ENCODE measurements at regions of chr6 and their contacts with region 1.

Region 1: DNA sequence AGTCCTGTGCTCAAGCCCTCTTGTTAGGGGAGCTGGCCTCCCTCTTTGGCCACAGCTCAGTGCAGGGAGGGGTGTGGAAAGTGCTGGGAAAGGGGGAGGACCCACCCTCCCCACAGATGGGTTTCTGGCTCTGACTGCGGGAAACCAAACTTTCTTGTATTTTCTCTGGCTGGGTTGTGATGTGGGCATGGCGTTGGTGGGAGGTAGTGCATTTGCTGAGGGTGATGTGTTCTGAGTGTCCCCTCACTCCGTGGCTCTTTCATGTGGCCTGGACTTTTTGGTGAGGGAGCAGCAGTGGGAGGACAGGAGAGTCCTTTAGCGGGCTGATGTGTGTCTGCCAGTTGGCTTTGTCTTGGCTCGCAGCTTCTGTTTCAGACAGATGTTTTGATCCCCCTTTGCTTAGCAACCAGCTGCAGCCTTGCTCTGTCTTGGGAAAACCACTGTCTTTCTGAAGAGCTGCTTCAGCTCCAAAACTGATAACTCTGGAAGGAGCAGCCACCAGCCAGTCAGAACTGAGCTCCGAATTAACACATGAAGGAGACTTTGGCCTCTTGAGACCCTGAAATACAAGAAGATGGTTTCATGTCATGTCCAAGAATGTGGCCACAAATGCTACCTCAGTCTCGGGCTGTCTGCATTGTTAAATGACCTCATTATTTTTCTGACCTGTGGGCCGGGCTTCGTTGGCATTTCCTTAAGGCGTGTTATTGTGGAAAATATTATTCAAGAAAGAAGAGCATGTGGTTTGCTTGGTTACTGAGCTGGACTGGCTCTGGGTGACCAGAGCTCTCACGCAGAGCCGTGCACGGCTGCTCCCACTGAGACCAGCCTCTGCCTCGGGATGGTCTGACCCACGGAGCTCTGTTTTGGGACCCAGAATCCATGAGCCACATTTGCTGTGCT is 21.5 kb downstream of the SYNJ2 start:
- DNase-seq: peak; percentile 46 to 59
- H3K4me3 ChIP-seq: no peak overlapping the region
- H3K27ac ChIP-seq: peak overlapping the region; percentile 68
- H3K4me1 ChIP-seq: peaks cover 41% of the 10 kb centered on the region
- H3K27me3 ChIP-seq: no peaks in the 10 kb centered on the region
- CTCF ChIP-seq: no peak

Region 2: DNA sequence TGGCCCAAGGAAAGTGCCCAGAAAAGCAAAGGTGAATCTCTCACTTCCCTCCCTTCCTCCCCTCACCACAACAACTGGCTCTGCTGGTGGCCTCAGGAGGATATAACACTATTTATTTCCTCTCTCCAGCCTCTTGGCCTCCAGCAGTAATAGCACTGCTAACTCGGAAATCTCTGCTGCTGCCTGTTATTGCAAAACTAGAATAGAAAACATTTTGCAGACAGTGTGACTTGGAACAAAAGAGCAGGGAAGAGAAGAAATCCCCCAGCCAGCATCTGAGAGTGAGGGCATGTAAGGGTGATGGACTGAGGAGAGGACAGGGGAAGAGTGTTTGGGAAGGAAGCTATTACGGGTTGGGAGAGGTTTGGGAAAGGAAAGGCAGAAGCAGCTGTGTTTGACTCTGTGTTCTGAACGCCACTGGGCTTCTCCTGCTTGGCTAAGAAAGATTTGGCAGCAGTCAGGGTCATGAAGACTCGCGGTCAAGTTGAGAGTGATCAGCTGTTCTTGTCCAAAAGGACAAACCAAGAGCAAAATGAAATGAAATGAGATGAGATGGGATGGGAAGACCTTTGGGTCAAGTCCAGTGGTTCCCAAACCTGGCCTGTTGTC is 261.1 kb before region 1 on chr6:
- CTCF ChIA-PET with region 1: no interaction called
- POLR2A ChIA-PET with region 1: no interaction called
- intact Hi-C with region 1: no loop called
- DNase-seq: no peak
- H3K4me3 ChIP-seq: no peak overlapping the region
- H3K27ac ChIP-seq: no peak overlapping the region
- H3K4me1 ChIP-seq: no peaks in the 10 kb centered on the region
- H3K27me3 ChIP-seq: no peaks in the 10 kb centered on the region
- CTCF ChIP-seq: no peak

Region 3: DNA sequence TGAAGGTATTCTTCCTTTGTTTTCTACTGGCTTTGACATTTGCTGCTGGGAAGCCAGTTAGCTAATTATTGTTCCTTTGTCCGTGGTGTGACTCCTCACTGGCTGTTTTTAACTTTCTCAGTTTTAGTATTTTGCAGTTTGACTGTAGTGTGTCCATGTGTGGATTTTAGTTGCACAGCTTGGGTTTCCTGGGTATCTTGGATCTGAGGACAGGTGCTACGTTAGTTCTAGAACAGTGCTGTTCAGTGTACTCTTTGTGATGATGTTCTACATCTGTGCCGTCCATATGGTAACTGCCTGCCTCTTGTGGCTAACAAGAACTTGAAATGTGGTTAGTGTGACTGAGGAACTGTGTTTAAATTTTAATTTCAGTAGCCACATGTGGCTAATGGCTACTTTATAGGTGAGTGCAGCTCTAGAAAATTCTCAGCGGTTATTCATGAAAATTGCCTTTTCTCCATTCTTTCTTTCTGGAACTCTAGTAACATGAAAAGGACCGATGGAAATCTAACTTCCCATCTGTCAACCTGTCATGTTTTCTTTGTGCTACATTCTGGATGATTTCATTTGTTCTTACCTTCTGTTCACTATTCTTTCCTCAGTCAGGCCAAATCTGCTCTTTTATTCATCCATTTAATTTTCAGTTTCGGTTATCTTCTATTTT is 172.7 kb before region 1 on chr6:
- CTCF ChIA-PET with region 1: no interaction called
- POLR2A ChIA-PET with region 1: no interaction called
- intact Hi-C with region 1: no loop called
- DNase-seq: no peak
- H3K4me3 ChIP-seq: no peak overlapping the region
- H3K27ac ChIP-seq: 0 out of 2 replicates have a peak overlapping the region, but pooled peaks have one; percentile 88
- H3K4me1 ChIP-seq: peaks cover 52% of the 10 kb centered on the region
- H3K27me3 ChIP-seq: no peaks in the 10 kb centered on the region
- CTCF ChIP-seq: no peak

Region 4: DNA sequence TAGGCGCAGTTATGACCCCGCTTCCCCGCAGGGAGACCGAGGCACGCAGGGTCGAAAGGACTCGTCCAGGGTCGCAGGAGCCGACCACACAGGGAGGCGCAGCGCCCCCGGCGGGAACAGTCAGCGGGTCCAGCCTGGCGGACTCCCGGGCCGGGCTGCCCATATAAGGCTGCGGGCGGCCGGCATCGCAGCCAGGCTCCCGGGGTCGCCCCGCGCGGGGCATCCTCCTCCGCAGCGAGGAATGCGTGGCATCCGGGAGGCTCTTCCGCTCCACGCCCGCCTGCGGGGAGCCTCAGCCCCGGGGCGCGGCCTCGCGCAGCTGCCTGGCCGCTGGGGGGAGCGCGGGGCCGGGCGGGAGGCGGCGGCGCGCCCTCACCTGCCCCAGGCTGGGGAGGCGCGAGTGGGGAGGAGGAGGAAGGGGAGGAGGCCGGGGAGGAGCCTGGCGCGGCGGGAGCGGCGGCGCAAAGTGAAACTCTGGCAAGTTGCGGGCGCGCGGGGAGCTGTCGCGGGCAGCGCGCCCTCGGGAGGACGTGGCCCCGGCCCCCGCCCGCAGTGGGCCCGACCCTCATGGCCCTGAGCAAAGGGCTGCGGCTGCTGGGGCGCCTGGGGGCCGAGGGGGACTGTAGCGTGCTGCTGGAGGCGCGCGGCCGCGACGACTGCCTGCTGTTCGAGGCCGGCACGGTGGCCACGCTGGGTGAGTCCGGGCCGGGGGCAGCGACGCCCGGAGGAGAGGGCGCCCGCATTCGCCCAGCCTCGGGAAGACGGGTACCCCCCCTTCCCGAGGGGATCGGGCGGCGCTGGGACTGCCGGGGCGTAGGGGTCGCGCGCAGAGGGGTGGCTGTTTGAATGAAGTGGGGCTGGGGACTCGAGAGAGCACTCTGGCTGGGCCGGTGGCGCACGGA is 21.6 kb before region 1 on chr6 and contains the start of gene SYNJ2:
- CTCF ChIA-PET with region 1: no interaction called
- POLR2A ChIA-PET with region 1: no interaction called
- intact Hi-C with region 1: loop called (anchors 1 kb)
- DNase-seq: peak; percentile 46 to 79
- H3K4me3 ChIP-seq: peak within 1 kb of the TSS; percentile 86
- H3K27ac ChIP-seq: 0 out of 2 replicates have a peak within 1 kb of the TSS, but pooled peaks have one; percentile 21
- H3K4me1 ChIP-seq: peaks cover 46% of the 10 kb centered on the region
- H3K27me3 ChIP-seq: no peaks in the 10 kb centered on the region
- CTCF ChIP-seq: peak; percentile 48; the same call in 1 of the 2 replicates
- total RNA-seq, gene SYNJ2: 30.3 and 39.4 TPM in 2 replicates

Region 5: GRCh38 chr6:158031381-158032353 is 28.5 kb after region 1 on chr6:
- CTCF ChIA-PET with region 1: interaction called, 5 read pairs
- POLR2A ChIA-PET with region 1: no interaction called
- intact Hi-C with region 1: loop called (anchors 2 kb)
- DNase-seq: peak; percentile 80 to 81
- H3K4me3 ChIP-seq: no peak overlapping the region
- H3K27ac ChIP-seq: peak overlapping the region; percentile 64
- H3K4me1 ChIP-seq: peaks cover 29% of the 10 kb centered on the region
- H3K27me3 ChIP-seq: no peaks in the 10 kb centered on the region
- CTCF ChIP-seq: no peak

Region 6: DNA sequence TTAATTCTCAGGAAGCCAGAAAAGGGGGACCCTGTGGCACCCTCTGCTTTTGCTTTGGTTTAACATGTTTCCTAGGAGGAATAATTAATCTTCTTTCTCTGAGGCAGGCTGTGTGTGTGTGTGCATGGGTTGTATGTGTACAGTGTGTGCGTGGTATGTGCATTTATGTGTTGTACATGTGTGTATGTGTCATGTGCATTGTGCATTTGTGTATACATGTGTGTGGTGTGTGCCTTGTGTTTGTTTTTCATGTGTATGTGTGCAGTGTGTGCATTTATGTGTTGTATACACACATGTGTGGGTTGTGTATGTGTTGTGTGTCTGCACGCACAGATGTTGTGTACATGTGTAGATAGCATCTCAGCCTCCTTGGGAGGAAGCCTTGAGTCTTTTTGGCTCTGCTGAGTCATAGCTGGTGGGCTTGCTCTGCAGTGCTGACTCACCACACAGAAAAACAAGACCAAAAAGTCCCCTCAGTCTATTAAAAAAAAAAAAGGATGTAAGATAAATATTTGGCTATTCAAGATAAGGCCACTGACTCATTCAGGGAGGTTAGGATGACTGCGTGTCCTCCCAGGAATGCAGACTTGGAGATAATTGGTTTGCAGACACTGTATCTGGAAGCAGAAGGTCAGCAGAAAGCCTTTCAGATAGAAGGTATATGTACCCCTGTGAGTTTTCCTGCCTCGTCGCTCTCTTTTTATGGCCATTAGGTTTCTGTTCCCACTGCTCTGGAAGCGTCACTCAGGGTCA is 37.0 kb after region 1 on chr6:
- CTCF ChIA-PET with region 1: no interaction called
- POLR2A ChIA-PET with region 1: interaction called, 4 read pairs
- intact Hi-C with region 1: loop called (anchors 1 kb)
- DNase-seq: peak; percentile 60 to 97
- H3K4me3 ChIP-seq: peak overlapping the region; percentile 43; the same call in 1 of the 2 replicates
- H3K27ac ChIP-seq: peak overlapping the region; percentile 90
- H3K4me1 ChIP-seq: peaks cover 59% of the 10 kb centered on the region
- H3K27me3 ChIP-seq: no peaks in the 10 kb centered on the region
- CTCF ChIP-seq: no peak

Measured in PC-9 (cell line).